Naive thymus-derived CD4-positive, alpha-beta T cell (primary cell): ENCODE measurements at regions of chr3 and their contacts with region 1.

Region 1: DNA sequence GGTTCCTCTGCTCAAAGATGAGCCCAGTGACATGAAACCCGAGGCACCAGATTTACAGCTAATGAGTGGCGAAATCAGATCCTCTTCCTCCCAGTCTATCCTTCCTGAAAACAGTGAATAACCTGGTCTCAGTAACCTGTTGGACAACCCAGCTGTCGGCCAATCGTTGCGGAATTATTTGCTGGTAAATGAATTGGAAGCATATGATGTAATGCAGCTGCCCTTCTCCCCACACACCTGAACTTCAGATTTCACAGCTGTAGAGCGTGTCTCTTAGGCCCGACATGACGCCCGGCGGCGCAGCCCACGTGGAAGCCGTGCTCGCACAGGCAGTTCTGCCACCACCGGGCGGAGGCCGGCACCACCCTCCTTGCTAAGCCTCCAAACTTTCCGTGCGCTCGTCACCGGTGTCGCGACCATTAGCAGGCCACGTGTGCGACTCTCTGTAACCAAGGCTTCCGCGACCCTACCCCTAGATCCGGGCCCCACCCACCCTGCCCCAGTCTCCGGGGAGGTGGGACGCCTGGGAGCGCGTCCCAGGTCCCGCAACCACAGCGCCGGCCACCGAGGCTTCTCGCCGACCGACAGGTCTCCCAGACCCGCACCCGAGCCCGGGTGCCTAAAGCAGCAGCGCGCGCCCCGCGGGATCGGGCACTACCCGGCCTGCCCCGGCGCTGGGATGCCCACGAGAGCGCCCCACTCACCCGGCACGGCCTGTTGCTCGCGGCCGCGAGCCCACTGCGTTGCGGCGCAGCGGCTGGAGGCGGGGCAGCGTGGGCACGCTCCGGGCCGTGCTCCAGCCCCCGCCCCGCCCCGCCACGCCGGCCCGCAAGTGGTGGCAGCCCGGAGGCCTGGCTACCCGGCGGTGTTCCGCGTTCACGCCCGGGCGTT is at the start of gene RIOX2:
- DNase-seq: peak; percentile 62 to 82 (median 77)
- ATAC-seq: peak; percentile 94
- H3K4me3 ChIP-seq: peak within 1 kb of the TSS; percentile 57
- H3K4me3 Mint-ChIP-seq: peak within 1 kb of the TSS; percentile 78 to 97 (median 93)
- H3K27ac ChIP-seq: peak within 1 kb of the TSS; percentile 74
- H3K27ac Mint-ChIP-seq: peak within 1 kb of the TSS; percentile 84 to 96 (median 90)
- H3K4me1 ChIP-seq: peaks cover 9 to 24% of the 10 kb centered on the region in 2 donors
- H3K4me1 Mint-ChIP-seq: peaks cover 42 to 85% (median 70%) of the 10 kb centered on the region in 7 donors
- H3K27me3 ChIP-seq: no peaks in the 10 kb centered on the region
- H3K27me3 Mint-ChIP-seq: no peaks in the 10 kb centered on the region
- total RNA-seq, gene RIOX2: 17.8 to 110 (median 28.4) TPM

Region 2: DNA sequence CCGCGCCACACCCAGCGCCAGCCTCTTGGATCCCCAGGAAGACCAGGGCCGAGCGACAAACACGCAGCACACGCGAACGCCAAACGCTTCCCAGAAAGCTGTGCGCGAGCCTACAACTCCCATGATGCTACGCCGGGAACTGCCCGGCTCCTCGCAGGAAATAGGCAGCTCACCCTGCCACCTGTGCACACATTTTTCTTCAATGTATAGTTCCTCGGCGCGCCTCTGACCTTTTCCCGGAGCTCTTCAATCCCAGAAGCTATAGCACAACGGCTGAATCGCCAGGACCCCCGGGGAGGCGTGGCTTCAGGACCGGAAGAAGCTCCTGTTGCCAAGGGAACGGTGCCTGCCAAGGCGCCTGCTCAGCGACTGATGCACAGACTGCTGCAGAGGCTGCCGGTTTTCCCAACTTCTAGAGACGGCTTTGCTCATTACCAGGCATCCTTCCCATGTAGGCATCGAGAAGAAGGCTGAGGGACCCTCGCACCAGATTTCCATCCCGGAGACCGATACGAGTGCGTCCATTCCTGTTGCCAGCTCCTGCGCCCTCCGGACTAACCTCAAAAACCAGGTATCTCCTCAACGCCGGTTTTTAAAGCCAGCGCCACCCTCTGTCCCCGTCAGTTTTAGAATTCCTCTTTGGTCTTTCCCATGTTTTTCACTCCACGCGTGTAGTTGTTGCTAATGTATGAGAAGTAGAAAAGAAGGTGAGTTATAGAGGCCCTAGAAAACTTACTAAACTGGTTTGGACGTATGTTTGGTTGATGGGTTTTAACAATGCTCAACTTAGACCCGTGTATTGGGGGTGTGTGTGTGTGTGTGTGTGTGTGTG is 207.3 kb before region 1 on chr3 and contains the start of gene ARL6:
- CTCF ChIA-PET with region 1: no interaction called
- POLR2A ChIA-PET with region 1: interaction called, 4 read pairs
- intact Hi-C with region 1: loop called (anchors 1 kb)
- DNase-seq: peak; percentile 53 to 78 (median 73)
- ATAC-seq: peak; percentile 95
- H3K4me3 ChIP-seq: peak within 1 kb of the TSS; percentile 98
- H3K4me3 Mint-ChIP-seq: peak within 1 kb of the TSS; percentile 91 to 99 (median 98)
- H3K27ac ChIP-seq: peak within 1 kb of the TSS; percentile 78
- H3K27ac Mint-ChIP-seq: peak within 1 kb of the TSS; percentile 90 to 97 (median 93)
- H3K4me1 ChIP-seq: peaks cover 5 to 15% of the 10 kb centered on the region in 2 donors
- H3K4me1 Mint-ChIP-seq: peaks cover 9 to 36% (median 27%) of the 10 kb centered on the region in 7 donors
- H3K27me3 ChIP-seq: no peaks in the 10 kb centered on the region
- H3K27me3 Mint-ChIP-seq: peaks cover 0 to 4% (median 0%) of the 10 kb centered on the region in 5 donors
- total RNA-seq, gene ARL6: 3.0 to 7.5 (median 5.8) TPM

Region 3: DNA sequence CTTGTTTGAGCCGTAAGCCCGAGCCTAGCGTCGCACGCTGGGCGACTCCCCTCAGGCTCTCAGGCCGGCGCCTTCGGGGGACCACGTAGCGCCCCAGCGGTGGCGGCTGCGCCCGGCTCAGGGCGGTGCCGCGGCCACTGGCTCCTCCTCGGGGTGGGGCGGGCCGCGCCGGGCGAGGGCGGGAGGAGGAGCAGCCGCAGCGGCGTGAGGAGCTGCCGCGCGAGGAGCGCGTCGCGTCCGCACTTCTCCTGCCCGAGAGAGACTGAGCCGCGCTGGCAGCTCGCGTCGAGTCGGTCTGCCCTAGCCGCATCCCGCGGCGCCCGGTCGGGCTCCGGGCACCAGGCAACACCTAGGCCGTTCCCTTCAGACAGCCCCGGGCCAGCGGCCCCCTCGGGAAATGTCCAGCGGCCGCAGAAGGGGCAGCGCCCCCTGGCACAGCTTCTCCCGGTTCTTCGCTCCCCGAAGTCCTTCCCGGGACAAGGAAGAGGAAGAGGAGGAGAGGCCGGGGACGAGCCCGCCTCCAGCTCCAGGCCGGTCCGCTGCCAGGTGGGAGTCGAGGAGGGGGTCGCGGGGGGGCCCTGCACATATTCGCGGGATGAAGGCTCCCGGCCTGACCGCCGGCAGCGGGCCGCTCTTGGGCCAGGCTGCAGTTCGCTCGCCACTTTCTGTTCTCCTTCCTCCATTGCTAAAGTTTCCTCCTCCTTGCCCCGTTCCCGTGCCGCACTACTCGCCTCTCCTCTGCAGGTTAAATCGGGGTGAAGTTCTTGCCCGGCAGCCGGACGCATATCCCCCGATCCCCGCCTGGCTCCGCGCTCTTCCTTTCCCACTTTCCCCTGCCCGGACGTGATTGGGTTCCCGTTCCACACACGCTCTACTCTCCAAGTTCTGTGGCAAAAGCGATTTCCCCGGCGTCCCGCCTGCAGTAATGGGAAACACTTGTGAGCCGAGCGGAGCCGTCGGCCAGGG is 149.8 kb before region 1 on chr3 and contains the start of gene CRYBG3:
- CTCF ChIA-PET with region 1: no interaction called
- POLR2A ChIA-PET with region 1: interaction called, 3 read pairs
- intact Hi-C with region 1: loop called (anchors 1 kb)
- DNase-seq: peak; percentile 64 to 93 (median 81)
- ATAC-seq: peak; percentile 98
- H3K4me3 ChIP-seq: peak within 1 kb of the TSS; percentile 83
- H3K4me3 Mint-ChIP-seq: peak within 1 kb of the TSS; percentile 93 to 98 (median 95)
- H3K27ac ChIP-seq: peak within 1 kb of the TSS; percentile 52
- H3K27ac Mint-ChIP-seq: peak within 1 kb of the TSS; percentile 76 to 98 (median 87)
- H3K4me1 ChIP-seq: peaks cover 0 to 6% of the 10 kb centered on the region in 2 donors
- H3K4me1 Mint-ChIP-seq: peaks cover 14 to 36% (median 21%) of the 10 kb centered on the region in 7 donors
- H3K27me3 ChIP-seq: peaks cover 0 to 3% of the 10 kb centered on the region in 2 donors
- H3K27me3 Mint-ChIP-seq: peaks cover 4 to 29% (median 26%) of the 10 kb centered on the region in 5 donors
- total RNA-seq, gene CRYBG3: 1.8 to 11.2 (median 5.1) TPM

Region 4: GRCh38 chr3:97940034-97940433 is 31.9 kb before region 1 on chr3:
- CTCF ChIA-PET with region 1: interaction called, 3 read pairs
- POLR2A ChIA-PET with region 1: interaction called, 8 read pairs
- intact Hi-C with region 1: loop called in 1 of 2 experiments (anchors 2 kb)
- DNase-seq: peak in 6 of 9 donors; percentile 5 to 41 (median 14)
- ATAC-seq: peak; percentile 48
- H3K4me3 ChIP-seq: no peak overlapping the region
- H3K4me3 Mint-ChIP-seq: no peak overlapping the region
- H3K27ac ChIP-seq: no peak overlapping the region
- H3K27ac Mint-ChIP-seq: peak overlapping the region in 2 of 9 donors; percentile 24 to 72
- H3K4me1 ChIP-seq: no peaks in the 10 kb centered on the region
- H3K4me1 Mint-ChIP-seq: peaks cover 0 to 11% (median 0%) of the 10 kb centered on the region in 7 donors
- H3K27me3 ChIP-seq: no peaks in the 10 kb centered on the region
- H3K27me3 Mint-ChIP-seq: no peaks in the 10 kb centered on the region

Region 5: DNA sequence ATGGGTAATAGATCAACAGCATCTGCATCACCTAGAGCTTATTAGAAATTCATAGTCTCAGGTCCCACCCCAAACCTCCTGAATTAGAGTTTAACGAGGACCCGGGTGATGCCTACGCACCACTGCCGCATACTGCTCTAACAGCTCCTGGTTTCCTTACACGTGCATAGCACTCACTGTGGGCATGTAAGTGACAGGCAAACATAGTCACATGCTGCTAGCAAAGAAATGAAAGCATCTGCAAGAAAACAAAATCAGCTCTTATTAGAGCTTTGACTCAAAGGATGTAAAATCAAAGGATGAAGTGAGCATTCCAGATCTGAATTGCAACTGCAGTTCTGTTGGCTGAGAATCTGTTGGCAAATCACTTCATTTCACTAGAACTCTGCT is 19.4 kb after region 1 on chr3:
- CTCF ChIA-PET with region 1: interaction called, 4 read pairs
- POLR2A ChIA-PET with region 1: interaction called, 3 read pairs
- intact Hi-C with region 1: loop called (anchors 1 to 2 kb)
- DNase-seq: peak in 7 of 9 donors; percentile 22 to 58 (median 48)
- ATAC-seq: peak; percentile 85
- H3K4me3 ChIP-seq: peak overlapping the region; percentile 19
- H3K4me3 Mint-ChIP-seq: peak overlapping the region; percentile 48 to 86 (median 83)
- H3K27ac ChIP-seq: peak overlapping the region; percentile 23
- H3K27ac Mint-ChIP-seq: peak overlapping the region; percentile 67 to 96 (median 89)
- H3K4me1 ChIP-seq: peaks cover 0 to 20% of the 10 kb centered on the region in 2 donors
- H3K4me1 Mint-ChIP-seq: peaks cover 13 to 48% (median 30%) of the 10 kb centered on the region in 7 donors
- H3K27me3 ChIP-seq: no peaks in the 10 kb centered on the region
- H3K27me3 Mint-ChIP-seq: peaks cover 0 to 7% (median 0%) of the 10 kb centered on the region in 5 donors

Region 6: GRCh38 chr3:98022978-98023820 is 51.3 kb after region 1 on chr3:
- CTCF ChIA-PET with region 1: interaction called, 3 read pairs
- POLR2A ChIA-PET with region 1: interaction called, 4 read pairs
- intact Hi-C with region 1: loop called (anchors 1 kb)
- DNase-seq: peak; percentile 72 to 96 (median 85)
- ATAC-seq: peak; percentile 85
- H3K4me3 ChIP-seq: no peak overlapping the region
- H3K4me3 Mint-ChIP-seq: peak overlapping the region in 3 of 10 donors; percentile 0 to 58 (median 8)
- H3K27ac ChIP-seq: no peak overlapping the region
- H3K27ac Mint-ChIP-seq: peak overlapping the region in 7 of 9 donors; percentile 2 to 66 (median 20)
- H3K4me1 ChIP-seq: peaks cover 0 to under 1% of the 10 kb centered on the region in 2 donors
- H3K4me1 Mint-ChIP-seq: peaks cover 2 to 27% (median 10%) of the 10 kb centered on the region in 7 donors
- H3K27me3 ChIP-seq: no peaks in the 10 kb centered on the region
- H3K27me3 Mint-ChIP-seq: peaks cover 0 to 5% (median 0%) of the 10 kb centered on the region in 5 donors

Region 7: GRCh38 chr3:98395101-98395500 is 423.2 kb after region 1 on chr3:
- CTCF ChIA-PET with region 1: no interaction called
- POLR2A ChIA-PET with region 1: no interaction called
- intact Hi-C with region 1: no loop called
- DNase-seq: no peak
- ATAC-seq: no peak
- H3K4me3 ChIP-seq: no peak overlapping the region
- H3K4me3 Mint-ChIP-seq: no peak overlapping the region
- H3K27ac ChIP-seq: no peak overlapping the region
- H3K27ac Mint-ChIP-seq: no peak overlapping the region
- H3K4me1 ChIP-seq: no peaks in the 10 kb centered on the region
- H3K4me1 Mint-ChIP-seq: peaks cover 0 to 2% (median 0%) of the 10 kb centered on the region in 7 donors
- H3K27me3 ChIP-seq: no peaks in the 10 kb centered on the region
- H3K27me3 Mint-ChIP-seq: peaks cover 4 to 50% (median 15%) of the 10 kb centered on the region in 5 donors

Region 8: GRCh38 chr3:98901392-98902350 is 929.7 kb after region 1 on chr3 and contains the start of gene DCBLD2:
- CTCF ChIA-PET with region 1: no interaction called
- POLR2A ChIA-PET with region 1: no interaction called
- intact Hi-C with region 1: loop called in 1 of 2 experiments (anchors 5 kb)
- DNase-seq: peak; percentile 90 to 96 (median 94)
- ATAC-seq: peak; percentile 99
- H3K4me3 ChIP-seq: peak within 1 kb of the TSS; percentile 86
- H3K4me3 Mint-ChIP-seq: peak within 1 kb of the TSS; percentile 89 to 97 (median 94)
- H3K27ac ChIP-seq: peak within 1 kb of the TSS; percentile 78
- H3K27ac Mint-ChIP-seq: peak within 1 kb of the TSS; percentile 44 to 96 (median 86)
- H3K4me1 ChIP-seq: peaks cover 5% of the 10 kb centered on the region in 2 donors
- H3K4me1 Mint-ChIP-seq: peaks cover 14 to 27% (median 22%) of the 10 kb centered on the region in 7 donors
- H3K27me3 ChIP-seq: no peaks in the 10 kb centered on the region
- H3K27me3 Mint-ChIP-seq: peaks cover 0 to 30% (median 8%) of the 10 kb centered on the region in 5 donors
- total RNA-seq, gene DCBLD2: 1.9 to 4.7 (median 2.9) TPM

Region 9: GRCh38 chr3:99544786-99545281 is 1572.9 kb after region 1 on chr3:
- CTCF ChIA-PET with region 1: no interaction called
- POLR2A ChIA-PET with region 1: no interaction called
- intact Hi-C with region 1: no loop called
- DNase-seq: no peak
- ATAC-seq: no peak
- H3K4me3 ChIP-seq: no peak overlapping the region
- H3K4me3 Mint-ChIP-seq: no peak overlapping the region
- H3K27ac ChIP-seq: no peak overlapping the region
- H3K27ac Mint-ChIP-seq: peak overlapping the region in 1 of 9 donors; percentile 33
- H3K4me1 ChIP-seq: no peaks in the 10 kb centered on the region
- H3K4me1 Mint-ChIP-seq: peaks cover 0 to 26% (median 17%) of the 10 kb centered on the region in 7 donors
- H3K27me3 ChIP-seq: no peaks in the 10 kb centered on the region
- H3K27me3 Mint-ChIP-seq: peaks cover 0 to under 1% (median 0%) of the 10 kb centered on the region in 5 donors